Activated CD4-positive, alpha-beta memory T cell treated with anti-CD3 and anti-CD28 coated beads, Interleukin-2, amount 10 ng/mL, durations not matched to agents 7 days and 5 days (primary cell): ENCODE measurements at regions of chr10 and their contacts with region 1.

Region 1: GRCh38 chr10:71569775-71570588 is 149.6 kb downstream of the C10orf105 start:
- DNase-seq: peak; percentile 78
- H3K4me3 Mint-ChIP-seq: no peak overlapping the region
- H3K27ac Mint-ChIP-seq: no peak overlapping the region
- H3K4me1 Mint-ChIP-seq: no peaks in the 10 kb centered on the region
- H3K27me3 Mint-ChIP-seq: peaks cover under 1% of the 10 kb centered on the region

Region 2: GRCh38 chr10:71314028-71314693 is 255.8 kb before region 1 on chr10:
- CTCF ChIA-PET with region 1: interaction called, 32 read pairs
- POLR2A ChIA-PET with region 1: no interaction called
- DNase-seq: peak; percentile 58
- H3K4me3 Mint-ChIP-seq: no peak overlapping the region
- H3K27ac Mint-ChIP-seq: no peak overlapping the region
- H3K4me1 Mint-ChIP-seq: peaks cover 16% of the 10 kb centered on the region
- H3K27me3 Mint-ChIP-seq: peaks cover 18% of the 10 kb centered on the region

Region 3: DNA sequence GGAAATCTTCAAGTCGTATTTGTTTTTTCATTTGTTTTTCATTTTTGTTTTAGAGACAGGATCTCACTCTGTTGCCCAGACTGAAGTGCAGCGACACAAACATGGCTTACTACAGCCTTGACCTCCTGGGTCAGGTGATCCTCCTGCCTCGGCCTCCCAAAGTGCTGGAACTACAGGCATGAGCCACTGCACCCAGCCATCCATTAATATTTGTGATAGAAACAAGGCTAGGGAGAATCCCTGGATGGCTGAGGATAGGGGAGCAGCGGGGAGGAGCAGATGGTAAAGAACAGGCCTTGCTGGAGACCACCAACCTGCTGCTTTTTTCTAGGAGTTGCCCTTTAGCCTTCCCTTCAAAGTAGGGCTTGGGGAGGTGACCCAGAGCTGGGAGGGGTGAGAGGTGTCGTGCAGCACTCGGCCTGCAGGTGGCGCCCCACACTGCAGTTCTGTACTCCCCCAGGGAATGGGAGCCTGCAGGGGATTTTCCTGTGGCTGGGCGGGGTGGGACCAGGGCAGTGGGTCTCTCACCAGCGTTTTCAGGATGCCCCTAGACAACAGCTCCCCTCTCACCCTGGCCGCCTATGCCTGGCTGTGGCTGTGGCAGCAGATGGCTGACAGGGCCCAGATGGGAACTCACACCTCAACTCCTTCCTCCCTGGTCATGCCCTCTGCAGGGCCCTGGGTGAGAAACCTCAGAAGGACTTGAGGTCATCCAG is 185.9 kb before region 1 on chr10:
- CTCF ChIA-PET with region 1: interaction called, 33 read pairs
- POLR2A ChIA-PET with region 1: no interaction called
- DNase-seq: peak; percentile 75
- H3K4me3 Mint-ChIP-seq: no peak overlapping the region
- H3K27ac Mint-ChIP-seq: no peak overlapping the region
- H3K4me1 Mint-ChIP-seq: no peaks in the 10 kb centered on the region
- H3K27me3 Mint-ChIP-seq: peaks cover 11% of the 10 kb centered on the region

Region 4: GRCh38 chr10:71534568-71535194 is 35.3 kb before region 1 on chr10:
- CTCF ChIA-PET with region 1: no interaction called
- POLR2A ChIA-PET with region 1: no interaction called
- DNase-seq: no peak
- H3K4me3 Mint-ChIP-seq: no peak overlapping the region
- H3K27ac Mint-ChIP-seq: no peak overlapping the region
- H3K4me1 Mint-ChIP-seq: peaks cover 5% of the 10 kb centered on the region
- H3K27me3 Mint-ChIP-seq: peaks cover 2% of the 10 kb centered on the region

Region 5: GRCh38 chr10:71587941-71588573 is 18.1 kb after region 1 on chr10:
- CTCF ChIA-PET with region 1: interaction called, 10 read pairs
- POLR2A ChIA-PET with region 1: no interaction called
- DNase-seq: no peak
- H3K4me3 Mint-ChIP-seq: no peak overlapping the region
- H3K27ac Mint-ChIP-seq: no peak overlapping the region
- H3K4me1 Mint-ChIP-seq: no peaks in the 10 kb centered on the region
- H3K27me3 Mint-ChIP-seq: peaks cover 14% of the 10 kb centered on the region